ENCODE measurements at regions of chrX and their contacts with region 1.

Region 1: GRCh38 chrX:109485470-109486340 is 3.8 kb upstream of the GUCY2F start:
- DNase-seq: peak; percentile 64
- ATAC-seq: peak; percentile 63
- H3K4me3 ChIP-seq: no peak overlapping the region
- H3K27ac ChIP-seq: no peak overlapping the region
- H3K4me1 ChIP-seq: no peaks in the 10 kb centered on the region
- H3K27me3 ChIP-seq: no peaks in the 10 kb centered on the region; the same call in 1 of the 2 replicates
- CTCF ChIP-seq: peak; percentile 92

Region 2: GRCh38 chrX:109632906-109633504 is 147.3 kb after region 1 on chrX:
- CTCF ChIA-PET with region 1: interaction called, 8 read pairs
- POLR2A ChIA-PET with region 1: no interaction called
- in situ Hi-C with region 1: no loop called
- intact Hi-C with region 1: loop called (anchors 1 kb)
- DNase-seq: no peak
- ATAC-seq: no peak
- H3K4me3 ChIP-seq: no peak overlapping the region
- H3K27ac ChIP-seq: no peak overlapping the region
- H3K4me1 ChIP-seq: no peaks in the 10 kb centered on the region
- H3K27me3 ChIP-seq: no peaks in the 10 kb centered on the region
- CTCF ChIP-seq: peak; percentile 60; the same call in 1 of the 2 replicates

Region 3: GRCh38 chrX:109890895-109891502 is 405.3 kb after region 1 on chrX:
- CTCF ChIA-PET with region 1: no interaction called
- POLR2A ChIA-PET with region 1: no interaction called
- in situ Hi-C with region 1: no loop called
- intact Hi-C with region 1: loop called (anchors 2 kb)
- DNase-seq: peak; percentile 47
- ATAC-seq: peak; percentile 86
- H3K4me3 ChIP-seq: no peak overlapping the region
- H3K27ac ChIP-seq: no peak overlapping the region
- H3K4me1 ChIP-seq: no peaks in the 10 kb centered on the region
- H3K27me3 ChIP-seq: no peaks in the 10 kb centered on the region; the same call in 1 of the 2 replicates
- CTCF ChIP-seq: peak; percentile 88